ENCODE measurements at regions of chr14 and their contacts with region 1.

Region 1: GRCh38 chr14:103628684-103629502 is at the start of gene KLC1:
- DNase-seq: peak; percentile 94
- H3K4me3 ChIP-seq: peak within 1 kb of the TSS; percentile 82 to 98 (median 96)
- H3K27ac ChIP-seq: peak within 1 kb of the TSS; percentile 95 to 100 (median 99)
- H3K4me1 ChIP-seq: peaks cover 60 to 71% (median 70%) of the 10 kb centered on the region in 4 donors
- H3K27me3 ChIP-seq: no peaks in the 10 kb centered on the region
- CTCF ChIP-seq: no peak
- EP300 ChIP-seq: no peak
- POLR2A ChIP-seq: peak; percentile 93
- total RNA-seq, gene KLC1: 285 to 343 (median 312) TPM

Region 2: DNA sequence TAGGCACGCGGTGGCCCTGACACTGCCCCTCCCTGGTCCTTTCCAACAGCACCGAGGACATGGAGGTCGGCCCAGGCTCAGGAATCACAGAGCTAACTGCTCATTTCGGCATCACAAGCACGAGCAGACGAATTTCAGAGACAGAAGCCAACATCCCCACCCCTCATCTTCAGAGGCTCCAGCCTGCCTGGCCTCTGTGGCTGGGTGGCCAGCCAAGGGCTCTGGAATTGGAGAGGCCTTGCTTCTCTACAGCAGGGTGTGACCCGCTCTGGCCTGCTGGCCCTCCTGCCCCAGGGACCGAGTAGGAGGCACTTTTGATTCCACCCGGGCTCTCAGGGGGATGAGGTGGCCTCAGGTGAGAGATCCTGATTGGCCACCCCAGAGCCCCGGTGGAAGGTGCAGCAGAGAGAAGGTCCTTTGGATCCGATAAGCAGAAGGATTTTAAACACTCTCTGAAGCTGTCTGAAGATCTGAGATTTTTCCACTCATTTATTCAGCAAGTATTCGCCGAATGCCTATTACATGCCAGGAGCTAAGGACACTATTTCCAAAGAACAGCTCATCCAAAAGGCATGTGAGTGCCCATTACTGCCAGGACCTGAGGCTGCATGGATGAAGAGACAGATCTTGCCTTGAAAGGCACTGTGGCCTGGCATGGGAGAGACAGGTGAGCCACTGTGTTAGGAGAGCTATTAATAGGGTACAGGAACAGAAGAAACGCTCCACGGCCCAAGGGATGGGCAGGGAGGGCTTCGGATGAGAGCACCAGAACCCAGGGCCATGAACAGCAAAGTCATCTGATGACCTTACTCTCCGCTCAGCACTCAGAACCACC is 76.7 kb before region 1 on chr14:
- intact Hi-C with region 1: no loop called
- DNase-seq: no peak
- H3K4me3 ChIP-seq: peak overlapping the region; percentile 28 to 60 (median 49)
- H3K27ac ChIP-seq: peak overlapping the region; percentile 94 to 98 (median 96)
- H3K4me1 ChIP-seq: peaks cover 54 to 99% (median 97%) of the 10 kb centered on the region in 4 donors
- H3K27me3 ChIP-seq: peaks cover 0 to 2% (median 0%) of the 10 kb centered on the region in 4 donors
- CTCF ChIP-seq: no peak
- EP300 ChIP-seq: no peak
- POLR2A ChIP-seq: no peak

Region 3: DNA sequence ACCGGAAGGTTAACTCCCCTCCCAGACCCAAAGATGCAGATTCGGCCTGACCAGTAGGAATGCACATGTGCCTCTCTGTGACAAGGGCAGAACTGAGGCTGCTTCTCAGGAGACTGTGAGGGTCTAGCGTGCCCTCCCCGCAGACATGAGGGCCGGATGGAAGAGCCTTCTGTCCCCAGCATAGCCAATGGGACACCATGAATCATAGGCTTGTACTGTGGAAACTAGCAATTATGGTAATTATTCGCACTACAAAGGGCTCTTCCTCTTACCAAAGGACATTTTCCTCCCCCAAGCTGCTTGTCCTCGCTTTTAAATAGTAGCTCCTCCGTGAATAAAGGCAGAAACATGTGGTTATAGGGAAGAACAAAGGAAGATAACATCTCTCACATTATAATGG is 59.9 kb before region 1 on chr14:
- intact Hi-C with region 1: no loop called
- DNase-seq: no peak
- H3K4me3 ChIP-seq: no peak overlapping the region
- H3K27ac ChIP-seq: no peak overlapping the region
- H3K4me1 ChIP-seq: peaks cover 18 to 72% (median 48%) of the 10 kb centered on the region in 4 donors
- H3K27me3 ChIP-seq: no peaks in the 10 kb centered on the region
- CTCF ChIP-seq: no peak
- EP300 ChIP-seq: no peak
- POLR2A ChIP-seq: no peak

Region 4: DNA sequence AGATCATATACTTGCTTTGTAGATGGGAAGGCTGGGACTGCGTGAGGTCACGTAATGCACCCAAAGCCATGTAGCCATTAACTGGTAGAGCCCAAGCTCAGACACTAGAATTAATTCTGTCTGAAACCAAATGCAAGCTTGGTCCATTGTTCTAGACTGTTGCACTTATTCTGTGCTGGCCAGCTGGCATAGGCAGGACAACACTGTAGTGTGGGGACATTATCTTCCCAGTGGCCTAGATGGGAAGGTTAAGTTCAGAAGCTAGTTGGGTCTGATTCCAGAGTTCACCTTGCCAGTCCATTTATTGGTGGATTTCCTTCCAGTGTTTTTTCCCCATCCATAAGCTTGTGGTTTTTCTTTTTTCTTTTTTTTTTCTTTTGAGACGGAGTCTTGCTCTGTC is 39.2 kb after region 1 on chr14:
- intact Hi-C with region 1: loop called (anchors 5 kb)
- DNase-seq: no peak
- H3K4me3 ChIP-seq: no peak overlapping the region
- H3K27ac ChIP-seq: no peak overlapping the region
- H3K4me1 ChIP-seq: peaks cover 0 to 25% (median 23%) of the 10 kb centered on the region in 4 donors
- H3K27me3 ChIP-seq: no peaks in the 10 kb centered on the region
- CTCF ChIP-seq: no peak
- EP300 ChIP-seq: no peak
- POLR2A ChIP-seq: no peak

Region 5: DNA sequence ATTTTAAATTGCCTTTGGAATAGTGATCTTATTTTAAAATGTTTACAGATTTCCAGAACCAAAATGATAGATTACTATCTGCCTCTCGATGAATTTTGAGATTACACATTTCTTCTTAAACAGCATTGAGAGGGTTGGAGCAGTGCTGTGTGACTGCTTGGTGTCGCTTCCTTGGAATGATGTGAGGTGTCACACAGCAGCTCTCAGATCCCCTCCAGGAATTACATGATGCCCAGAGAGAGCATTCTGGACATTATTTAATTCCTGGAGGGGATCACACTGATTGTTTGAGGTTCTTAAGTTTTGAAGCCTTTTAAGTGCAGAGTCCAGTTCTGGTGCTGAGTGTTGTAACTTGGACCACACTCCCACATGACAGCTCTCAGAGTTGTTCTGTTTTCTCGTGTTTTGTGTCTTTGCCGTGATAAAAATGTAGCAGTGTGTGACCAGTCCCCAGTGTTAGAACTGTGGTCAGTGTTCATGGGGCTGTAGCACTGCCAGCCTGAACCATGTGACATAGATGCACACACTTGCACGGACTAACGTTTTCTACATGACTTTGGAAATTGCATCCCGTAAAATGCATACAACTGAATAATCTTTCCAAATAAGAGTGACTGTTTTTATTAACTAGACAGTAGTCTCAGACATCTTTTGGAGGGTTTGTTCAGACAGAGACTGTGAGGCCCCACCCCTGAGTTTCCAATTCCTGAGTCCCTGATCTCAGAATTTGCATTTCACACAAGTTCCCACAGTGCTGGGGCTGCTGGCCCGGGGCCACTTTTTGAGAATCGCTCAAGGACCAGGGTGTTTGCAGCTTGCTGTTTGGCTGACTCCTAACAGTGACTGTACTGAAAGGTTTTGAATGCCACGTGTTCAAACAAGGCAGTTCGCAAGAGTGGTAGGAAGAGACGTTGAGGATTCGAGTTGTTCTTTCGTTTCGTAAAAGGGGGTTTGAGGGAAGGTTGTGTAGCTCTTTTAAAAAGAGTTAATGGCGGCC is 60.3 kb after region 1 on chr14:
- intact Hi-C with region 1: no loop called
- DNase-seq: no peak
- H3K4me3 ChIP-seq: no peak overlapping the region
- H3K27ac ChIP-seq: peak overlapping the region in 1 of 4 donors; percentile 28
- H3K4me1 ChIP-seq: peaks cover 15 to 44% (median 34%) of the 10 kb centered on the region in 4 donors
- H3K27me3 ChIP-seq: no peaks in the 10 kb centered on the region
- CTCF ChIP-seq: no peak
- EP300 ChIP-seq: no peak
- POLR2A ChIP-seq: no peak